BJ (cell line): ENCODE measurements at regions of chr12 and their contacts with region 1.

Region 1: DNA sequence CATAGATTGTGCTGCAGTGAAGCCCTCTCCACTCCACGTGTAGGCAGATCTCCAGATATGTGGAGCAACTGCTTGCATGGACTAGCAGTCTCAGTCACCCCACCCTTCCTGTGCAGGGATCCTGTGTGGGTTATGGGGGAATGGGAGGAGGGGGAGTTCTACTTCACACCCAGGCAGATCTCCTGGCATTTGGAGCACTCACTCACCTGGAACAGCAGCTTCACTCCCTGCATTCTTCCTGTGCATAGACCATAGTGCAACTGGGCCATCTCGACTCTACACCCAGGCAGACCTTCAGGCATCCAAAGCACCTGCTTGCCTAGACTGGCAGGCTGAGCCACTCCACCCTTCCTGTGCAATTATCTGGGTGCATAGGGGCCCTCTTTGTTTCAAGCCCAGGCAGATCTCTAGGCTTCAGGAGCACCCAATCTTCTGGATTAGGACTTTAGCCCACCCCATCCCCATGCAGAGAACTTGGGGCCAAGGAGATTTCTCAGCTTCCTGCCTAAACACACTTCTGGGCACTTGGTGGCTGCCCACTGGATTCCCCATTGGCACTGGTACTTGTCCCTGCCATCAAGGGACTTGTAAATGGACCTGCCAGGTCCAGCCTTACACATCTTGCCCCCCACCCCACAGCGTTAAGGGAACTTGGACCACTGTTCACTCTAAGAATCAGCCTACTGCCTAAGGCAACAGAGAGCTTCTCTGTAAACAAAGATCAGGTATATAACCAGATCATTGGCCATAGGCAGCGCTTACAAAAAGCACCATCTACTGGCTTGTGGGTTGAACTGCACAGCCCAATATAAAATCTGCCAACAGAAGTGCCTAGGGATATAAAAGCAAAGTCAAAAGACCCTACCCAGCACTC is 95.8 kb upstream of the PCED1B start:
- DNase-seq: no peak
- H3K4me3 ChIP-seq: no peak overlapping the region
- H3K27me3 ChIP-seq: no peaks in the 10 kb centered on the region
- CTCF ChIP-seq: peak; percentile 89

Region 2: DNA sequence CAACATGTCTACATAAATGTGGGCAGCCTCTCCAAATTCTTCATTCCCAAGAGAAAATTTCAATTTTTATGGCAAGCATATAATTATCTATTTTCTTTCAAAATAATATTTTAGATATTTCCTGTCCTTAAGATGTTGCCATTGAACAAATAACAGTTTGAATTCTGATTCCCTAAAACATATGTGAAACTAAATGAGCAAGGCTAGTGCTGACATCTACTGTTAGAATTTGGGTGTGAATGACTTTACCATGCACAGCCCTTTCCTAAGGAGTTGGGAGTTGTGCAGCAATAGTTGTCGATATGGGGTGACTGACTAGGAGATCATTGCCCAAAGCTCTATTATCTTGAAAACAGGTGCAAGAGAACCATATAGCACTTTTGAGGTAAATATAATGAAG is 49.7 kb before region 1 on chr12:
- CTCF ChIA-PET with region 1: no interaction called
- POLR2A ChIA-PET with region 1: no interaction called
- DNase-seq: no peak
- H3K4me3 ChIP-seq: no peak overlapping the region
- H3K27me3 ChIP-seq: no peaks in the 10 kb centered on the region
- CTCF ChIP-seq: peak; percentile 62

Region 3: DNA sequence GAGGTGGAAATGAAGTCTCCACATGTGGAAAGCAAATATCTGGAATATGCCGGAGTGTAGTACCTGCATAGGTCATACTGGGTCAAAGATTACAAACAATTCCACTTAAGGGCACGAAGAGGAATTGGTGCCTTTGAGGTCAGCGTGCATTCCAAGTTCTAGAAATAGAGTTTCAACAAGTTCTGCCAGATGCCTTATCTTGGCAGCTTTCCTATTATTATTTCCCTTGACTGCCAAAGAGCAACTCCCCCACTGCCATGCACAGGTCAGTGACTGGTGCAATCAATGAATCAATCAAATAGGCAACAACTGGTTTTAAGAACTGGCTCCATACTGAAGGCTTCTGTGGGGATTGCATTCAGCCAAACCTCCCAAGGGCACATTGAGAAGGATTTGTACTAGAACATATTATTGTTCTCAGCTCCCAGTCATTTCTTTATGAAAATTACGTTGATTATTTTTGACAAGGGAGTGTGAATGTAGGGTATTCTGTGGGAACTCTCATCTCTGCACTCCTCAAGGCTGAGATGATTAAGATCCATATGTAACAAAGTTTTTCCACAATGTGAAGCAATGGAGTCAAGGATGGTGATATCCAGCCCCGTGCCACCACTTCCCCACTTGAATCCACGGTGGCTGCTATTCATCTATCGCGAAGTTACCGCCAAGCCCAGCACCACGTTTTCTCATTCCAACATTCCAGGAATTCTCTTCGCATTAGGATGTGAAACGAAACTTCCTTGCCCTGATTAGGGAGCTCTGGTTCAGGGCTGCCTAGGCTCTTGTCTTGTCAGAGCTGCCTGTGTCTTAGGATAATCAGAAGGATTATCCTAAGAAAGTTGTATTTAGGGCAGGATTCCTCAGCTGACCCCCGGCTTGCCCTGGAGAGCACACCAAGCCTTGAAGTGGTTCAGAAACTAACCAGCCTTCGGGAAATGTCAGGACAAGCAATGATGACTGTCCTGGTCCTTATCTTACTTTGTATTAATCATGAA is 19.4 kb before region 1 on chr12:
- CTCF ChIA-PET with region 1: interaction called, 12 read pairs
- POLR2A ChIA-PET with region 1: interaction called, 3 read pairs
- DNase-seq: no peak
- H3K4me3 ChIP-seq: no peak overlapping the region
- H3K27me3 ChIP-seq: no peaks in the 10 kb centered on the region
- CTCF ChIP-seq: no peak

Region 4: GRCh38 chr12:47021298-47021697 is 37.7 kb after region 1 on chr12:
- CTCF ChIA-PET with region 1: interaction called, 11 read pairs
- POLR2A ChIA-PET with region 1: no interaction called
- DNase-seq: peak; percentile 62
- H3K4me3 ChIP-seq: no peak overlapping the region
- H3K27me3 ChIP-seq: no peaks in the 10 kb centered on the region
- CTCF ChIP-seq: peak; percentile 54

Region 5: GRCh38 chr12:47216150-47216677 is 232.6 kb after region 1 on chr12:
- CTCF ChIA-PET with region 1: no interaction called
- POLR2A ChIA-PET with region 1: no interaction called
- DNase-seq: no peak
- H3K4me3 ChIP-seq: no peak overlapping the region
- H3K27me3 ChIP-seq: no peaks in the 10 kb centered on the region
- CTCF ChIP-seq: no peak